ENCODE measurements at regions of chrX and their contacts with region 1.

Region 1: GRCh38 chrX:81377329-81377728 is 175.4 kb downstream of the SH3BGRL start:
- DNase-seq: peak; percentile 23
- H3K4me3 ChIP-seq: no peak overlapping the region
- H3K27ac ChIP-seq: no peak overlapping the region
- H3K4me1 ChIP-seq: no peaks in the 10 kb centered on the region
- H3K27me3 ChIP-seq: no peaks in the 10 kb centered on the region
- CTCF ChIP-seq: peak; percentile 60

Region 2: DNA sequence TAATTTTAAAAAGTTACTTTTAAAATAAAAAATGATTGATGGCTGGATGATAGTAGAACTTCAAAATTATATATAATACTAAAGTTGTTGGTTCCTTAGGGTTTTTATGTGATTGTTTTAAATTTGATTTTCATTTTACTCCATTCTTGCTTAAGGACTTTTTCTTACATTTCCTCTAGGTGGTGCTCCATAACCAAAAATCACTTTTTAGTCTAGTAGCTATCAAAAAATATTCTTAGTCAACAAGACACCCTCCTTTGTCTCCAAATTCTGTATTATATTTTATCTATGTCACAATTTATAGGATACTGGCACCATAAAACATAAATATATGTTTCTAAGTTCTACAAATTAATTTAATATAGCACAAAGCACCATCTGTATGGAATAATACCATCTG is 500.5 kb before region 1 on chrX:
- CTCF ChIA-PET with region 1: no interaction called
- POLR2A ChIA-PET with region 1: no interaction called
- intact Hi-C with region 1: loop called (anchors 2 kb)
- DNase-seq: peak; percentile 49
- H3K4me3 ChIP-seq: no peak overlapping the region
- H3K27ac ChIP-seq: no peak overlapping the region
- H3K4me1 ChIP-seq: no peaks in the 10 kb centered on the region
- H3K27me3 ChIP-seq: no peaks in the 10 kb centered on the region
- CTCF ChIP-seq: peak; percentile 58

Region 3: GRCh38 chrX:81174286-81174685 is 203.0 kb before region 1 on chrX:
- CTCF ChIA-PET with region 1: no interaction called
- POLR2A ChIA-PET with region 1: no interaction called
- intact Hi-C with region 1: loop called (anchors 5 kb)
- DNase-seq: peak; percentile 31
- H3K4me3 ChIP-seq: no peak overlapping the region
- H3K27ac ChIP-seq: no peak overlapping the region
- H3K4me1 ChIP-seq: no peaks in the 10 kb centered on the region
- H3K27me3 ChIP-seq: no peaks in the 10 kb centered on the region
- CTCF ChIP-seq: peak; percentile 44

Region 4: DNA sequence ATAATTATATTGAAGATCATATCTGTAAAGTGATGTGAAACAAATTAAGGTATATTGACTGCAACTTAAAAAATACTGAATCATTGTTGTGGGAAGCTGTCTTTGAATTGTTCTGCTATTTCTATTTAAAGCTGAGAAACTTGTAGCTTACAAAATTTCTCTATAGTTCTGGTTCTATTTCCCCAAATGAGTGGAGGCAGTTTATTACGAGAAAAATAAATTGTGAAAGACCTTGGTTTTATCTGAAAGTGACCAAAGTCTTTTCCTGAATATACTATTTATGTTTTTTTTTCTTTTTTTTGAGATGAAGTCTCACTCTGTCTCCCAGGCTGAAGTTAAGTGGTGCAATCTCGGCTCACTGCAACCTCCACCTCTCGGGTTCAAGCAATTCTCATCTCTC is 10.0 kb before region 1 on chrX:
- CTCF ChIA-PET with region 1: no interaction called
- POLR2A ChIA-PET with region 1: no interaction called
- intact Hi-C with region 1: no loop called
- DNase-seq: no peak
- H3K4me3 ChIP-seq: no peak overlapping the region
- H3K27ac ChIP-seq: no peak overlapping the region
- H3K4me1 ChIP-seq: no peaks in the 10 kb centered on the region
- H3K27me3 ChIP-seq: no peaks in the 10 kb centered on the region
- CTCF ChIP-seq: no peak

Measured in A673 (cell line).